Endothelial cell of umbilical vein (primary cell): ENCODE measurements at regions of chr6 and their contacts with region 1.

Region 1: DNA sequence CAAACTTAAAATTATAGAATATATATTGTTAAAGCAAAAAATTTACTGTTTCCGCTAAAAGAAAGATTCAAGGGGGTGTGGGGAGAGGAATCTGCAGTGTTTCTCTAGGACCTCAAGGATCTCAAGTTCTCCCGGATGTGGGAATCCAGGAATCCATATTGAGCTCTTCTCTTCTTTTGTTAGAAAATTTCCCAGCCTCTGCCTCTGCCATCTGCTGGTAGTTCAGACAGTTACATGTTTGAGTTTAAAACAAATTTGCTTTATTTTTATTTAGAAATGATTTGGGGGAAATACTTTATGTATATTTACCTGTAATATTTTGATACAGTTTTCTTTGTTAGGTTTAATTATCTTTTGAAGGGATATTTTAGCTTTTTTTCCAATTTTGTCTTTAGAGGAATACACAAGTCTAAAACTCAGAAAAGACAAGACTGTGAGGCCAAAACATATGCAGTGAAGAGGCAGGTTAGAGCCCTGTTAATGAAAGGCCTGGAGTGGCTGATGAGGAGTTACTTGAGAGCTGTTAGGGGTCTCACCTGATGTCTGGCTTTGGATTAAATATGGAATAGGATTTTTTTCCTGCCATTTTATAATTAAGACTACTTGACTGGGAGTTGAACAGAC is 268.8 kb downstream of the ARID1B start:
- DNase-seq: peak; percentile 44
- H3K4me3 ChIP-seq: no peak overlapping the region
- H3K27ac ChIP-seq: no peak overlapping the region
- H3K4me1 ChIP-seq: peaks cover 14% of the 10 kb centered on the region
- H3K27me3 ChIP-seq: no peaks in the 10 kb centered on the region
- CTCF ChIP-seq: peak; percentile 39 to 48
- POLR2A ChIP-seq: no peak

Region 2: DNA sequence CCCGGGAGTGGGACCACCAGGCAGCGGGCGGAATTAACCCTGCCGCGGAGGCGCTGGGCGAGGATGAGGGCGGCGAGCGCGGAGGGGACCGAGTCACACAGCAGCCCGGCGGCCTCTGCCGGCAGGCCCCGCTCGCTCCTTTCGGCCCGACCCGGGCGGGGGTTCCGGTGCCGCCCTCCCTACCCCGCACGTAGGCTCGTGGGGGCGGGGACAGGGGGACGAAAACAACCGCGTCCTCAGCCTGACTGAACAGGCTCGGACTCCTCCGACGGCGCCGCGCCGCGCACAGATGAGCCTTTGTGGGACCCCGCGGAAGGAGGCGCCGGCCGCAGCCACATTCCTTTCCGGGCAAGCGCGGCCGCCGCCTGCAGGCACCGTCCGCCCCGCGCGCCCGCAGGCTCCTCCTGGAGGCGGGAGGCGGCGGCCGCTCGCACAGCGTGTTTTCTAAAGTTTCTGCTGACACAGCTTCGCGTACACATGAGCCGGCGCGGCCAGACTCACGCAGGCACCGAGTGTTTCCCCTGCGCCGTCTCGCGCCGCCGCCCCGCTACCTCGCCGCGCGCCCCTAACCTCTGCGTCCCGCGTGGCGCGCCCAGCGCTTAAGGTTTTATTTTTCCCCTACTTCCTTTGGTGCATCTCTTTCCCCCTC is 24.5 kb before region 1 on chr6:
- CTCF ChIA-PET with region 1: interaction called, 13 read pairs
- POLR2A ChIA-PET with region 1: no interaction called
- dilution Hi-C with region 1: no loop called
- intact Hi-C with region 1: no loop called
- DNase-seq: peak; percentile 85
- H3K4me3 ChIP-seq: peak overlapping the region; percentile 39 to 94 (median 92)
- H3K27ac ChIP-seq: peak overlapping the region; percentile 92
- H3K4me1 ChIP-seq: peaks cover 18% of the 10 kb centered on the region
- H3K27me3 ChIP-seq: no peaks in the 10 kb centered on the region
- CTCF ChIP-seq: peak; percentile 24 to 46
- POLR2A ChIP-seq: peak; percentile 94

Region 3: DNA sequence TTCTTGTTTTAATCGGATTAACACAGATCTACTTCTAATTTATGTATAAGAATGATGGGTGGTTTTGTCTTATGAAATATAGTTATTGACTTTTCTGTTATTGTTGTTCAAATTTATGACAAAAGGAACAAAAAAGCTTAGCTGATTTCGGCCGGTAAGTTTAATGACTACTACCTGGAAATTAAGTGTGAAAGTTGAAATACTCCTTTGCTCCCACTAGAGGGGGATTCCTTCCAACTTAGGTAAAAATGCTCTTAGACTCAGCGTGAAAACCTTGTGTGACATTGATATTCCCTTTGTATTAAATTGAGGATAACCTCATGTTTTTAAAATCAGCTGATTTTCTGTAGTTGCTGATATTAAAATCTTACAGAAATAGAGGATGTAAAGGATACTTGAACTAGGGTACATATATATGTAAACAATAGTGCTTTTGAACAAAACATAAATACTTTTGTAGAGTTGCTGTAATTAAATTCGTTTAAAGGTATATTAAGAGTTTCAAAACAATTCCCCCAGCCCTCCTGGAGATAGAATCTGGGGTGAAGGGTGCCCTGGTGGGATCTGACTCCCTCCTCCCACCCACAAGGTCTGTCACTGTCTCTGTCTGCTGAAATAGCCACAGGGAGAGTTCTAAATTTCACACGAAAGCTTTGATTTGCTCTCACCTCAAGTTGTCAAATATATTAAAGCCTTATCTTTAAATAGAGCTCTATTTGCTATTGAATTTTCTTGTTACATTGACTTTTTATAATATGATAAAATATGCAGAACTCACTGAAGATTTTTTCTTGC is 11.3 kb before region 1 on chr6:
- CTCF ChIA-PET with region 1: interaction called, 63 read pairs
- POLR2A ChIA-PET with region 1: no interaction called
- dilution Hi-C with region 1: no loop called
- intact Hi-C with region 1: no loop called
- DNase-seq: peak; percentile 65
- H3K4me3 ChIP-seq: no peak overlapping the region
- H3K27ac ChIP-seq: peak overlapping the region; percentile 16
- H3K4me1 ChIP-seq: peaks cover 8% of the 10 kb centered on the region
- H3K27me3 ChIP-seq: no peaks in the 10 kb centered on the region
- CTCF ChIP-seq: peak; percentile 50 to 54
- POLR2A ChIP-seq: no peak

Region 4: GRCh38 chr6:157059781-157060180 is 13.8 kb after region 1 on chr6:
- CTCF ChIA-PET with region 1: interaction called, 19 read pairs
- POLR2A ChIA-PET with region 1: interaction called, 8 read pairs
- dilution Hi-C with region 1: no loop called
- intact Hi-C with region 1: no loop called
- DNase-seq: peak; percentile 56
- H3K4me3 ChIP-seq: no peak overlapping the region
- H3K27ac ChIP-seq: no peak overlapping the region
- H3K4me1 ChIP-seq: peaks cover 12% of the 10 kb centered on the region
- H3K27me3 ChIP-seq: no peaks in the 10 kb centered on the region
- CTCF ChIP-seq: no peak
- POLR2A ChIP-seq: no peak

Region 5: GRCh38 chr6:157148391-157149323 is 102.7 kb after region 1 on chr6:
- CTCF ChIA-PET with region 1: interaction called, 10 read pairs
- POLR2A ChIA-PET with region 1: no interaction called
- dilution Hi-C with region 1: no loop called
- intact Hi-C with region 1: no loop called
- DNase-seq: peak; percentile 97
- H3K4me3 ChIP-seq: peak overlapping the region in 1 of 3 experiments; percentile 1
- H3K27ac ChIP-seq: peak overlapping the region; percentile 97
- H3K4me1 ChIP-seq: peaks cover 60% of the 10 kb centered on the region
- H3K27me3 ChIP-seq: no peaks in the 10 kb centered on the region
- CTCF ChIP-seq: no peak
- POLR2A ChIP-seq: no peak

Region 6: DNA sequence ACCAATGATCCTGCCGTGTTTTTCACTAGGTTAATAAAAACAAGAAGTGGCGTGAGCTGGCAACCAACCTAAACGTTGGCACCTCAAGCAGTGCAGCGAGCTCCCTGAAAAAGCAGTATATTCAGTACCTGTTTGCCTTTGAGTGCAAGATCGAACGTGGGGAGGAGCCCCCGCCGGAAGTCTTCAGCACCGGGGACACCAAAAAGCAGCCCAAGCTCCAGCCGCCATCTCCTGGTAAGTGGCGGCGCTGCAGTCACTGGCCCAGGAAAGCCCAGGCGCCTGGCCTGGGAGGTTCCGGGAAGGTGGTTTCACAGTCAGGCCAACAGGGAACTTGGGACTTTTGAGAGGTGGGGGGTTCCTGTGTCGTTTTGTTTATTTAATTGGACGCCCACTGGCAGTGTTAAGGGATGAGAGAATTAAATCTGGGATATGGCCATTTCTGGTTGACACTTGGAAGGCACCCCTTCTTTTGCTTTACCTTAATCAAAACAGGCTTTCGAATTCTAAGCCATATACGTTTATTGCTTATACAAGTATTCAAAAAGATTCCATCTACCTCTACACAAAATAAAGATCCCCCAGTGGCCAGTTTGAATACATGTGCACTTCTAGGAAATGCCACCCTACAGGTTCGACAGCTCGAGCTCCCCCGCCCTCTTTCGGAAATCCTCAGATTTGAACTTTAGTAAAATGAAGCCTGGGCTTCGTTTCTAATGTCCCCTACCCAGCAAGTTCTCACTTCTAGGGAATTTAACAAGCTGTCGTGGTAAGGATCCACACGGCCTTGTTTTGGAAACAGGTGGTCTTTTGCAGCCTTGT is 138.5 kb after region 1 on chr6:
- CTCF ChIA-PET with region 1: interaction called, 17 read pairs
- POLR2A ChIA-PET with region 1: no interaction called
- dilution Hi-C with region 1: no loop called
- intact Hi-C with region 1: no loop called
- DNase-seq: peak; percentile 44
- H3K4me3 ChIP-seq: no peak overlapping the region
- H3K27ac ChIP-seq: no peak overlapping the region
- H3K4me1 ChIP-seq: no peaks in the 10 kb centered on the region
- H3K27me3 ChIP-seq: no peaks in the 10 kb centered on the region
- CTCF ChIP-seq: peak; percentile 82 to 89
- POLR2A ChIP-seq: no peak